B cell (primary cell): ENCODE measurements at regions of chr12 and their contacts with region 1.

Region 1: GRCh38 chr12:67355578-67356379 is 86.6 kb downstream of the CAND1 start:
- DNase-seq: peak; percentile 74
- ATAC-seq: no peak
- H3K4me3 ChIP-seq: no peak overlapping the region
- H3K4me3 Mint-ChIP-seq: no peak overlapping the region
- H3K27ac ChIP-seq: no peak overlapping the region
- H3K27ac Mint-ChIP-seq: no peak overlapping the region
- H3K4me1 ChIP-seq: peaks cover 3 to 7% of the 10 kb centered on the region in 2 donors
- H3K4me1 Mint-ChIP-seq: peaks cover 4% of the 10 kb centered on the region
- H3K27me3 ChIP-seq: no peaks in the 10 kb centered on the region
- H3K27me3 Mint-ChIP-seq: no peaks in the 10 kb centered on the region
- CTCF ChIP-seq: peak; percentile 80

Region 2: GRCh38 chr12:67370979-67371378 is 15.2 kb after region 1 on chr12:
- CTCF ChIA-PET with region 1: interaction called, 34 read pairs
- POLR2A ChIA-PET with region 1: no interaction called
- intact Hi-C with region 1: no loop called
- DNase-seq: no peak
- ATAC-seq: no peak
- H3K4me3 ChIP-seq: no peak overlapping the region
- H3K4me3 Mint-ChIP-seq: no peak overlapping the region
- H3K27ac ChIP-seq: no peak overlapping the region
- H3K27ac Mint-ChIP-seq: no peak overlapping the region
- H3K4me1 ChIP-seq: no peaks in the 10 kb centered on the region
- H3K4me1 Mint-ChIP-seq: no peaks in the 10 kb centered on the region
- H3K27me3 ChIP-seq: no peaks in the 10 kb centered on the region
- H3K27me3 Mint-ChIP-seq: no peaks in the 10 kb centered on the region
- CTCF ChIP-seq: no peak

Region 3: GRCh38 chr12:67441736-67442346 is 86.1 kb after region 1 on chr12:
- CTCF ChIA-PET with region 1: interaction called, 13 read pairs
- POLR2A ChIA-PET with region 1: no interaction called
- intact Hi-C with region 1: loop called (anchors 2 kb)
- DNase-seq: peak; percentile 76
- ATAC-seq: peak; percentile 88
- H3K4me3 ChIP-seq: no peak overlapping the region
- H3K4me3 Mint-ChIP-seq: peak overlapping the region; percentile 18
- H3K27ac ChIP-seq: no peak overlapping the region
- H3K27ac Mint-ChIP-seq: no peak overlapping the region
- H3K4me1 ChIP-seq: peaks cover 7 to 8% of the 10 kb centered on the region in 2 donors
- H3K4me1 Mint-ChIP-seq: peaks cover 8% of the 10 kb centered on the region
- H3K27me3 ChIP-seq: no peaks in the 10 kb centered on the region
- H3K27me3 Mint-ChIP-seq: no peaks in the 10 kb centered on the region
- CTCF ChIP-seq: peak; percentile 83

Region 4: DNA sequence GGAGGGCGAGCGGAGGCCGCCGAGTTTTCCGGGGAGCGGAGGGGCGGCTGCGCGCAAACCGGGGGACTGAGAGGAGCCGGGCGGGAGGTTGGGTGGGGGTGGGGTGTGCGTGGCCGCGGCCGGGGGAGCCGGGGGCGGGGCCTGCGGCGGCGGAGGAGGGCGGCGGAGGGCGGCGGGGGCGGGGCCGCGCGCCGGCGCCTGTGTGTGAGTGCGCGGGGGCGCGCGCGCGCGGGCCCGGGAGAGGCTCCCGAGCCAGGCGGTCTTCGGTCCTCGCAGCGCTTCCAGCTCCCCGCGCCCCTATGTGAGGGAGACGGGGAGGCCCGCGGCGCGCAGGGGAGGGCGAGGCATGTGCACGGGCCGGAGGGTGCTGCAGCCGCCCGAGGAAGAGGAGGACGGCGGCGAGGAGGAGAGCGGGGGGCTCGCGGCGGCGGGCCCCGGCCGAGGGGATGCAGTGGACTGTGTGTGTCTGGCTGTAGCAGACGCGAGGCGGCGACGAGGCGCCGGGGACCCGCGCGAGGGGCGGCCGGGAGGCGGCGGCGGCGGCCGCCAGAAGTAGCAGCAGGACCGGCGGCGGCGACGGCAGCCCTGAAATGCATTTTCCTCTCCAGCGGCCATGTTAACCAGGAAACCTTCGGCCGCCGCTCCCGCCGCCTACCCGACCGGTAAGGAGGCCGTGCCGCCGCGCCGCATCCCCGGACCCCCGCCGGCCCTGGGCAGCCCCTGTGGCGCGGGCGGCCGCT is 292.9 kb after region 1 on chr12 and contains the start of gene DYRK2:
- CTCF ChIA-PET with region 1: interaction called, 16 read pairs
- POLR2A ChIA-PET with region 1: no interaction called
- intact Hi-C with region 1: loop called (anchors 5 kb)
- DNase-seq: peak; percentile 88
- ATAC-seq: peak; percentile 64
- H3K4me3 ChIP-seq: peak within 1 kb of the TSS; percentile 49 to 95 (median 85)
- H3K4me3 Mint-ChIP-seq: peak within 1 kb of the TSS; percentile 98
- H3K27ac ChIP-seq: peak within 1 kb of the TSS; percentile 42 to 77
- H3K27ac Mint-ChIP-seq: peak within 1 kb of the TSS; percentile 95
- H3K4me1 ChIP-seq: peaks cover 25 to 35% of the 10 kb centered on the region in 2 donors
- H3K4me1 Mint-ChIP-seq: peaks cover 39% of the 10 kb centered on the region
- H3K27me3 ChIP-seq: no peaks in the 10 kb centered on the region
- H3K27me3 Mint-ChIP-seq: no peaks in the 10 kb centered on the region
- CTCF ChIP-seq: peak; percentile 15
- total RNA-seq, gene DYRK2: 75.3 and 77.9 TPM in 2 replicates

Region 5: GRCh38 chr12:67661311-67662021 is 305.7 kb after region 1 on chr12:
- CTCF ChIA-PET with region 1: interaction called, 10 read pairs
- POLR2A ChIA-PET with region 1: no interaction called
- intact Hi-C with region 1: loop called (anchors 5 kb)
- DNase-seq: no peak
- ATAC-seq: no peak
- H3K4me3 ChIP-seq: no peak overlapping the region
- H3K4me3 Mint-ChIP-seq: no peak overlapping the region
- H3K27ac ChIP-seq: no peak overlapping the region
- H3K27ac Mint-ChIP-seq: no peak overlapping the region
- H3K4me1 ChIP-seq: no peaks in the 10 kb centered on the region
- H3K4me1 Mint-ChIP-seq: peaks cover 39% of the 10 kb centered on the region
- H3K27me3 ChIP-seq: no peaks in the 10 kb centered on the region
- H3K27me3 Mint-ChIP-seq: no peaks in the 10 kb centered on the region
- CTCF ChIP-seq: no peak

Region 6: GRCh38 chr12:67943226-67943892 is 587.6 kb after region 1 on chr12:
- CTCF ChIA-PET with region 1: interaction called, 346 read pairs
- POLR2A ChIA-PET with region 1: no interaction called
- intact Hi-C with region 1: loop called (anchors 1 kb)
- DNase-seq: peak; percentile 78
- ATAC-seq: peak; percentile 85
- H3K4me3 ChIP-seq: no peak overlapping the region
- H3K4me3 Mint-ChIP-seq: no peak overlapping the region
- H3K27ac ChIP-seq: no peak overlapping the region
- H3K27ac Mint-ChIP-seq: no peak overlapping the region
- H3K4me1 ChIP-seq: peaks cover 5 to 8% of the 10 kb centered on the region in 2 donors
- H3K4me1 Mint-ChIP-seq: peaks cover 4% of the 10 kb centered on the region
- H3K27me3 ChIP-seq: no peaks in the 10 kb centered on the region
- H3K27me3 Mint-ChIP-seq: peaks cover 3% of the 10 kb centered on the region
- CTCF ChIP-seq: peak; percentile 87

Region 7: DNA sequence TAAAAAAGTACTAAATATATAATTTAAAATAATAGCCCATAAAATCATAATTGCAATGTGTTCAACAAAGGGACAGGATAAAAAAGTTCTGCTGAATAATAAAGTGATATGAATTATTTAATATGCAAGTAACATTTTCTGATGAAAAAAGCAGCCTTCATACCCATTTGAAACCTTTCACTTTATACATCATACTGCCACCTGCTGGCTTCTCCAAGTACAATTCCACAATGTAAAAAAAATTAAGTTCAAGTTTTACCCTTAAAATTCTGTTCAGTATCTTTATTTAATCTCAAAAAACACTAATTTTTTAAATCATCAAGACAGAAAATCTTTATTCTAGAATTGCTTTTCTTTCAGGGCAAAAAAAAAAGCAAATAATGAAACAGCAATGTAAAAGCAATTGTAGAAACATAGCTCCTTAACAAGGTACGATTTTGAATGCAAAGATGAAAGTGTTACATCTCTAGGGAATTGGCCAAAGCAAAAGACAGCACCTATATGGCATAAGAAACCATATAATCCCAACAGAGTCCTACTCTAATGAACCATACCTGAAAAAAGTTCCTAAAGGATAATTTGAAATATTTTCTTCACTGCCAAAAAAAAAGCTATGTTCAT is 961.4 kb after region 1 on chr12:
- CTCF ChIA-PET with region 1: interaction called, 29 read pairs
- POLR2A ChIA-PET with region 1: no interaction called
- intact Hi-C with region 1: no loop called
- DNase-seq: peak; percentile 65
- ATAC-seq: no peak
- H3K4me3 ChIP-seq: no peak overlapping the region
- H3K4me3 Mint-ChIP-seq: no peak overlapping the region
- H3K27ac ChIP-seq: no peak overlapping the region
- H3K27ac Mint-ChIP-seq: no peak overlapping the region
- H3K4me1 ChIP-seq: no peaks in the 10 kb centered on the region
- H3K4me1 Mint-ChIP-seq: no peaks in the 10 kb centered on the region
- H3K27me3 ChIP-seq: no peaks in the 10 kb centered on the region
- H3K27me3 Mint-ChIP-seq: no peaks in the 10 kb centered on the region
- CTCF ChIP-seq: peak; percentile 89